ENCODE measurements at regions of chrX and their contacts with region 1.

Region 1: DNA sequence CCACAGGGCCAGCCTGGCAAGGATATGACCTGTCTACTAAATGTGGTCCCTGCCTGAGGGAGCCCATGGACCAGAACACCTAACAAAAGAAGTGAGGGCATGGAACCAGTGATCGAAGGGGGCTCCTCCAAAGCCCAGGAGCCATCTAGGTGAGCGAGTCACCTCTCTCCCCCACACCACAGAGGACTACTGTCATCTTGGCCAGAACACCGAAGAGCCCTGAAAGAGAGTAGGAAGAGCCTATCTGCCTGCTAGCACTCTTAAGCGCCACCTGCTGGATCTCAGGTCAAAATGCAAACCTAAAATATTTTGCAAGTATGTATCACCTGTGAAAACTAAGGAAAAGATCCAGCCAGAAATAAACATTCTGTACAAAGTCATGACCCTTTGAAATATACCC is 137.9 kb upstream of the ZXDB start:
- DNase-seq: peak; percentile 39
- ATAC-seq: peak; percentile 65
- H3K4me3 Mint-ChIP-seq: no peak overlapping the region
- H3K27ac Mint-ChIP-seq: no peak overlapping the region
- H3K4me1 Mint-ChIP-seq: no peaks in the 10 kb centered on the region
- H3K27me3 Mint-ChIP-seq: no peaks in the 10 kb centered on the region

Region 2: GRCh38 chrX:57156397-57157049 is 297.4 kb before region 1 on chrX:
- CTCF ChIA-PET with region 1: no interaction called
- POLR2A ChIA-PET with region 1: no interaction called
- intact Hi-C with region 1: loop called in 1 of 2 experiments (anchors 2 kb)
- DNase-seq: peak; percentile 8
- ATAC-seq: no peak
- H3K4me3 Mint-ChIP-seq: no peak overlapping the region
- H3K27ac Mint-ChIP-seq: no peak overlapping the region
- H3K4me1 Mint-ChIP-seq: peaks cover 3% of the 10 kb centered on the region
- H3K27me3 Mint-ChIP-seq: no peaks in the 10 kb centered on the region